ENCODE measurements at regions of chr6 and their contacts with region 1.

Region 1: GRCh38 chr6:27672113-27672799 is 199.4 kb upstream of the ZNF184 start:
- DNase-seq: peak; percentile 29
- H3K4me3 Mint-ChIP-seq: peak overlapping the region; percentile 28
- H3K27ac Mint-ChIP-seq: peak overlapping the region; percentile 29
- H3K4me1 Mint-ChIP-seq: peaks cover 53% of the 10 kb centered on the region
- H3K27me3 Mint-ChIP-seq: peaks cover 73% of the 10 kb centered on the region

Region 2: GRCh38 chr6:27188885-27189418 is 483.3 kb before region 1 on chr6:
- intact Hi-C with region 1: loop called (anchors 5 kb)
- DNase-seq: peak; percentile 25
- H3K4me3 Mint-ChIP-seq: peak overlapping the region; percentile 93
- H3K27ac Mint-ChIP-seq: no peak overlapping the region
- H3K4me1 Mint-ChIP-seq: peaks cover 15% of the 10 kb centered on the region
- H3K27me3 Mint-ChIP-seq: peaks cover 4% of the 10 kb centered on the region

Region 3: GRCh38 chr6:27280064-27280539 is 392.2 kb before region 1 on chr6:
- intact Hi-C with region 1: loop called (anchors 5 kb)
- DNase-seq: no peak
- H3K4me3 Mint-ChIP-seq: peak overlapping the region; percentile 30
- H3K27ac Mint-ChIP-seq: no peak overlapping the region
- H3K4me1 Mint-ChIP-seq: peaks cover 7% of the 10 kb centered on the region
- H3K27me3 Mint-ChIP-seq: peaks cover 63% of the 10 kb centered on the region

Region 4: DNA sequence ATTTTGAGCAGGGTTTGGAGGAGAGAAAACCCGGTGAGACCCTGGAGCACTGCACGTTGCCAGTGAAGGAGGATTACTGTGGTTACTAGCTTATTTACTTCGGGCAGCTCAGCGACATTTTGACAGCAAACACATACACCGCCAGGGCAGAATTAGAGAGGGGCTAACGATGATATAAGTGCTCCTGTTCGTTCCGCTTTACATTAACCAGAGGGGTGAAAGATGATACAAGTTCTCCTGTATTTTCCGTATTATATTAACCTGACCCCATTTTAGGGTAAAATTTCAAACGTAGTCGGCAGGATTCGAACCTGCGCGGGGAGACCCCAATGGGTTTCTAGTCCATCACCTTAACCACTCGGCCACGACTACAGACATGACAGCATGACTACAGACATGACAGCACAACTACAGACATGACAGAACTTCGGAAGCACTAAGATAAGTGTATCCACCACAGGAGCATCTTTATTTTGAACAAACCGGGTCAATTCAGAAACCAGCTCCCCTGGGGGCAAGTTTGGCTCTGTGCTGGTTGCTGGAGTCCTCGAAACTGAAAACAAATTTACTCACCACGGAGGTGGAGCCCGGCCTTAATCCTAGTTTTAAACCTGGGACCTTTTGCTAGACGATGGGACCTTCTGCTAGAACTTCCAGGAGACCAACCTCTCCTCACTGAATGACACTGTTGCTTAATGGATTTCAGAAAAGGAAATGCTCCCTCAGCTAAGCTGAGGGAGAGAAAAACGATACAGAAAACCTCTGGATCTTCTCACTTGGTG is 118.9 kb before region 1 on chr6:
- intact Hi-C with region 1: loop called (anchors 2 kb)
- DNase-seq: no peak
- H3K4me3 Mint-ChIP-seq: peak overlapping the region; percentile 60
- H3K27ac Mint-ChIP-seq: peak overlapping the region; percentile 67
- H3K4me1 Mint-ChIP-seq: peaks cover 16% of the 10 kb centered on the region
- H3K27me3 Mint-ChIP-seq: peaks cover 68% of the 10 kb centered on the region

Region 5: DNA sequence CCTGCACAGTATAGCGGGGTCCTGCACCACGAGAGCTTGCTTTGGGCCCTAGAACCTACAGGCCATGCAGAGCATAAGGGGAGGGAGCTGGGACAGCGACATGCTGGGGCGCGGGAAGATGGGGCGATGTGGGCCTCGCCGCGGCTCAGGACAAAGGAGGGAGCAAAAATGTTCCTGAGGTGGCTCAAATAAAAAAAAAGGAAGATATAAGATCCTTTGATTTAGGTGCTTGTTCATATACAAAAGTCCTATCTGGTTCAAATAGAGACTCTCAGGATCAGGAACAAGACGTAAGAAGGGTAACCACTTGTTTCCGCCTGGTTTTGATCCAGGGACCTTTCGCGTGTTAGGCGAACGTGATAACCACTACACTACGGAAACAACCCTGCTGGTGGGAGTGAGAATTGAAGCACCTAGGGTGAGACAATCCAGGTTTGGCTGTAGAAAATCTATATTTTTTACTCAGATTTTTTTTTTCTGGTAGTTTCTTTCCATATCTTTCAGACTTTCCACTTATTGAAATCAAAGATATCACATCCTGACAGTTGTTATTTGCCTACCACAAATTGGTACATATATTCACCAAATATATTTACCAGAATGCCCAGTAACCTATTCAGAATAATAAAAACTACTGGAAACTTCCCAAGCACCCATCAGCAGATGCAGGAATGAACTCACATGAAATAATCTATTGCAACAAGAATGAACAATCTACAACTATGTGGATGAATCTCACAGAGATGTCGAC is 21.5 kb before region 1 on chr6:
- intact Hi-C with region 1: loop called (anchors 2 kb)
- DNase-seq: no peak
- H3K4me3 Mint-ChIP-seq: no peak overlapping the region
- H3K27ac Mint-ChIP-seq: peak overlapping the region; percentile 48
- H3K4me1 Mint-ChIP-seq: peaks cover 13% of the 10 kb centered on the region
- H3K27me3 Mint-ChIP-seq: peaks cover 27% of the 10 kb centered on the region

Region 6: GRCh38 chr6:28737750-28738395 is 1065.6 kb after region 1 on chr6:
- intact Hi-C with region 1: loop called (anchors 5 kb)
- DNase-seq: no peak
- H3K4me3 Mint-ChIP-seq: peak overlapping the region; percentile 12
- H3K27ac Mint-ChIP-seq: peak overlapping the region; percentile 54
- H3K4me1 Mint-ChIP-seq: peaks cover 10% of the 10 kb centered on the region
- H3K27me3 Mint-ChIP-seq: peaks cover 72% of the 10 kb centered on the region

Region 7: GRCh38 chr6:29082457-29082856 is 1410.2 kb after region 1 on chr6:
- intact Hi-C with region 1: no loop called
- DNase-seq: no peak
- H3K4me3 Mint-ChIP-seq: no peak overlapping the region
- H3K27ac Mint-ChIP-seq: no peak overlapping the region
- H3K4me1 Mint-ChIP-seq: no peaks in the 10 kb centered on the region
- H3K27me3 Mint-ChIP-seq: peaks cover 7% of the 10 kb centered on the region